Heart right ventricle (tissue), 16 donors: ENCODE measurements at regions of chr1 and their contacts with region 1.

Region 1: DNA sequence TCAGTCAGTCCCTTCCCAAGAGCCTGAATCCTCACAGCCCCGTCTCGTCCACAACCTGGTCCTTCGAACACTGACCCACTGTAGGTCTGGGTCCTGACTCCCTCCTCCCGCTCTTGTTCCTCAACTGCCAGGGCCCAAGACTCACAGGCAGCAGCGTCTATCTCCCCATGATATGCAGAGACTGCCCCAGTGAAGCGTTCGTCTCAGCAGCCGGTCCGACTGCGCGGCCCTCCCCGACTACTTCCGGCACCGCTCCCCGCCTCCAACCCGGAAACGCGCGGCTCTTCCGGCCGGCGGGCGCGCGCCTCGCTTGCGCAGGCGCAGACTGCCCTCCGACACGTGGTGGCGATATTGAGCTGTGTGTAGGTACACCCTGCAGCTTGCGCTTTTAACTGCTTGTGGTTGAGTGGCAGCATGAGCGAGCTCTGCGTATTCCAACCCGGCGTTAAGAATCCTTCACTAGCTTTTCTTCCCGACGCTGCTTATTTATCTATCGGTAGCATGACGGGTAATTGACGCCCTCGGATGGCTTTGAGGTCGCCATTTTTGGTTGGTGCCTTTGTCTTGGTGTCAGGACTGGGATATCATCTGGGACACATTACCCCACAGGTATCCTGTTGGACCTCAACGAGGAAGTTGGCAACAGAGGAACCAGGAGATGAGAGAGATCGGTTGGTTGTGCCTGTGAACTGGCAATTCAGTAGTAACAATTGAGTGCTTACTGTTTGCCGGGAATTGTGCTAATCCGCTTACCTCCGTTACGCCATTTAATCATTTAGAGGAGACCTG is at the start of gene TAF12:
- DNase-seq: peak; percentile 90 to 92
- ATAC-seq: peak; percentile 95 to 97 (median 96)
- H3K4me3 ChIP-seq: peak within 1 kb of the TSS; percentile 44 to 98 (median 80)
- H3K27ac ChIP-seq: peak within 1 kb of the TSS; percentile 38 to 95 (median 90)
- H3K4me1 ChIP-seq: peaks cover 8 to 45% (median 37%) of the 10 kb centered on the region in 9 donors
- H3K27me3 ChIP-seq: no peaks in the 10 kb centered on the region
- CTCF ChIP-seq: peak in 7 of 9 donors; percentile 29 to 62 (median 54)
- total RNA-seq, gene TAF12: 17.2 to 27.4 (median 19.4) TPM

Region 2: GRCh38 chr1:28668191-28668955 is 25.3 kb after region 1 on chr1 and contains the start of gene GMEB1:
- intact Hi-C with region 1: loop called in 4 of 10 experiments (anchors 1 to 2 kb)
- DNase-seq: peak; percentile 83 to 90
- ATAC-seq: peak; percentile 88 to 95 (median 92)
- H3K4me3 ChIP-seq: peak within 1 kb of the TSS; percentile 93 to 100 (median 98)
- H3K27ac ChIP-seq: peak within 1 kb of the TSS; percentile 98 to 100 (median 100)
- H3K4me1 ChIP-seq: peaks cover 5 to 26% (median 18%) of the 10 kb centered on the region in 9 donors
- H3K27me3 ChIP-seq: no peaks in the 10 kb centered on the region
- CTCF ChIP-seq: no peak
- total RNA-seq, gene GMEB1: 5.1 to 7.4 (median 6.4) TPM

Region 3: DNA sequence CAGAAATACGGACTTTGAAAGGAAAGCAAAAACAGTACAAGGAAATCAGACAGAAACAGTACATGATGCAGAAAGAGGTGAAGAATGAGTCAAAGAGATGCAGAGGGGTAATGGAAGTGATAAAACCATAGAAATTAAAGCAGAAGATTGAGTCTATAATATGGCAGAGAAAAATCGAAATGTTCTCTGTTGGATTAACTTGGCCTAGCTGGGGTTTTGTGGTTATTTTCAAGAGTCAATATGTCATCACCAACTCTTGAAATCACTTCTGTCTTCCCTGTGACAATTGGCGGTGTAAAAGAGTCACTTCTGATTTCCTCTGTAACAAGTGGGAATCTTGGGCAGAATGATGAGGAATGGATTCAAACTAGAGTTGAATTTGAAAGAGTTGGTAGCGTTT is 101.1 kb after region 1 on chr1:
- intact Hi-C with region 1: loop called in 5 of 10 experiments (anchors 5 to 10 kb)
- DNase-seq: no peak
- ATAC-seq: no peak
- H3K4me3 ChIP-seq: peak overlapping the region in 1 of 10 donors; percentile 13
- H3K27ac ChIP-seq: no peak overlapping the region
- H3K4me1 ChIP-seq: peaks cover 0 to 89% (median 67%) of the 10 kb centered on the region in 9 donors
- H3K27me3 ChIP-seq: no peaks in the 10 kb centered on the region
- CTCF ChIP-seq: no peak

Region 4: GRCh38 chr1:28886731-28887418 is 243.8 kb after region 1 on chr1:
- intact Hi-C with region 1: loop called in 1 of 10 experiments (anchors 10 kb)
- DNase-seq: peak; percentile 80 to 86
- ATAC-seq: peak; percentile 79 to 89 (median 84)
- H3K4me3 ChIP-seq: peak overlapping the region; percentile 53 to 99 (median 88)
- H3K27ac ChIP-seq: peak overlapping the region; percentile 34 to 93 (median 86)
- H3K4me1 ChIP-seq: peaks cover 0 to 45% (median 16%) of the 10 kb centered on the region in 9 donors
- H3K27me3 ChIP-seq: peaks cover 0 to 6% (median 0%) of the 10 kb centered on the region in 7 donors
- CTCF ChIP-seq: no peak